T-cell (primary cell): ENCODE measurements at regions of chr20 and their contacts with region 1.

Region 1: DNA sequence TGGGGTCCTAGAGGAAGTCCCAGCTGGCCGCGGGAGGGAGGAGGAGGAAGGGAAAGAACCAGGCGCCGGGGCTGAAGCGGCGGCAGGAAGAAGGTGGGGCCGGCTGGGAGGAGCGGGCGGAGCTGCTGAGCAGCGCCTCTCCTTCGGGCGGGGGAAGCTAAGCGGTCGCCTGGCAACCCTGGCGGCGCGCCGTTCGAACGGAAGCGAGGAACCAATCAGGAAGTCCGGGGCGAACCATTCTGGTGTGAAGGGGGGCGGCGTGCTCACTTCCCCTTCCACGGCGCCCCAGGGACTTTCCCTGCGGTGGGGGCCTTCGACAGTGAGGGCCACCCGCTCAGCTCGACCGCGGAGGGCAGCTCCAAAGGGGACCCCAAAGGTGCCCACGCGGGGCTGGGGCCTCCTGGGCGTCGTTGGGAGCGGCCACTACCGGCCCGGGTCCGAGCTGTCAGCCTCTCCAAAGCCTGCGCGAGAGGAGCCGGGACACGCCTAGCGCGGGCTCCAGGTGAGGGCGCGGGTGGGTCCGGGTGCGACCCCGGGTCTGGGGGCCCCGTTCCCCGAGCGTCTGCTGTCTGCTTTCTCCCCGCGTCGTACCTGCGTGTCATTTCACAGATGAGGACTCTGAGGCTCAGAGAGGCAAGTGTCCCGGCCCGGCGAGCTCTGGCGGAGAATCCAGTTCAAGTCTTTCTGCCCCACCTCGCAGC is at the start of gene FAM110A:
- DNase-seq: peak; percentile 92 to 99 (median 95)
- ATAC-seq: peak; percentile 93 to 96 (median 94)
- H3K4me3 ChIP-seq: peak within 1 kb of the TSS; percentile 87 to 98
- H3K4me3 Mint-ChIP-seq: peak within 1 kb of the TSS; percentile 78 to 92 (median 86)
- H3K27ac ChIP-seq: peak within 1 kb of the TSS; percentile 85
- H3K27ac Mint-ChIP-seq: peak within 1 kb of the TSS; percentile 78 to 89
- H3K4me1 ChIP-seq: peaks cover 17 to 35% of the 10 kb centered on the region in 2 experiments
- H3K4me1 Mint-ChIP-seq: peaks cover 43 to 50% (median 45%) of the 10 kb centered on the region in 3 donors
- H3K27me3 ChIP-seq: no peaks in the 10 kb centered on the region
- H3K27me3 Mint-ChIP-seq: no peaks in the 10 kb centered on the region
- total RNA-seq, gene FAM110A: 12.7 to 27.9 (median 26.9) TPM

Region 2: DNA sequence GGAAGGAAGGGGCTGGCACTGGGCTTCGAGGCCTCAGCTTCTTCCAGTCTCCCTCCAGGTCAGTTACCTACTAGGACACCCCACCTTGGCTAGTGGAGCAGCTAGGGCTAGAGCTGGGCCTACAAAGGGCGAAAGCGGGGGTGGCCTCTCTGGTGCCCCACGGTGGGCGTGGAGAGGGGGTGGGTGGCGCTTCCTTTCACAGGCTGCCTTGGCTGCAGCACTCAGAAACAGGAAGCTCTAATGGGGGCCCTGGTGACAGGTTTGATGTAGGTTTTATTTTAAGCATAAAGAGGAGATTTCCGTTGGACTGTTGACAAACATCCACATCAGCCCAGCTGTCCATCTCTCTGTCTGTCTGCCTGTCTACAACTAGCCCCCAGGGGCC is 13.3 kb after region 1 on chr20:
- CTCF ChIA-PET with region 1: interaction called in 1 of 2 experiments, 11 read pairs
- POLR2A ChIA-PET with region 1: interaction called, 3 to 10 read pairs
- DNase-seq: peak in 34 of 35 experiments; percentile 21 to 71 (median 54)
- ATAC-seq: peak; percentile 58 to 65 (median 60)
- H3K4me3 ChIP-seq: peak overlapping the region; percentile 78 to 87
- H3K4me3 Mint-ChIP-seq: peak overlapping the region; percentile 88 to 90 (median 89)
- H3K27ac ChIP-seq: peak overlapping the region; percentile 65
- H3K27ac Mint-ChIP-seq: peak overlapping the region; percentile 99
- H3K4me1 ChIP-seq: peaks cover 18 to 73% of the 10 kb centered on the region in 2 experiments
- H3K4me1 Mint-ChIP-seq: peaks cover 59 to 71% (median 66%) of the 10 kb centered on the region in 3 donors
- H3K27me3 ChIP-seq: peaks cover 0 to 3% of the 10 kb centered on the region in 2 experiments
- H3K27me3 Mint-ChIP-seq: no peaks in the 10 kb centered on the region

Region 3: DNA sequence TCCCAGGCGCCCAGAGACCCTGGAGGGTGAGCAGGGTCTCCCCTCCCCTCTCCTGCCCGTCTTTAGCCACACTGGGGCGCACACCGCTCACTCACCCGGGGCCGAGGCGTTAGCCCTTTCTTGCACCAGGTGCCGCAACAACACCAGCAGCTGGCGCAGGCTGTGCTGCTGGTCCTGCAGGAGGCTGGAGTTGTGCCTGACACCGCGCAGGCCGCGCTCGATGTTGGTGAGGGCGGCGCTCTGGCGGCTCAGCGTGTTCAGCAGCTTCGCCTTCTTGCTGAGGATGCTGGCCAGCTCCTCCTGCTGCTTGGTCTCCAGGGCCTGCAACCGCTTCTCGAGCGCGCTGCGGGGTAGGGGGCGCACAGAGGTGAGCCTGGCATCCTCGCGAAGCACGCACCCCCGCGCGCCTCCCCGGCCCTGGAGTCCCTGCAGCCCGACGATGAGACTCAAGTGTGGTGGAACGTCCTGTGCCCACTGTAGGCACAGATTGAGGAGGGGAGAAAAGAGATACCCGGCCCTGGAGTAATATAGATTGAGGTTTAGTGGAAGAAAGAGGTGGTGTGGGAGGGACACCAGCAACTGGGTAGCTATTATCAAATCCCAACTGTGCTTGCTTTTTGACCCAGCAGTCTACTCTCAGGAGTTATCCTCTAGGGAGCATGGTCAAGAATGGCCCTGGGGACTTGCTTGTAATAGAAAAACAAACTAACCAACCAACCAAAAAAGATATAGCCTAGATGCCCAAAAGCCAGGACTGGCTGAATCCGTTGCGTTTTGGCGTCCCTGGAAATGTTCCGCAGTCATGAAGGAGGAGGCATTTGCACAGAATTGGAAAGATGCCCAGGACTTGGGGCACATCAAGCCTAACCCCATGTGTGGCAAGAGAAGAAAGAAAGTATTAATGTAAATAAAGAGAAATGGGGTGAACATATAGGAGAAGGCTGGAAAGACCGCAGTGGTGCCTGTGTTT is 51.7 kb after region 1 on chr20:
- CTCF ChIA-PET with region 1: no interaction called
- POLR2A ChIA-PET with region 1: no interaction called
- DNase-seq: peak in 3 of 35 experiments; percentile 3 to 12 (median 6)
- ATAC-seq: peak in 1 of 4 experiments; percentile 53
- H3K4me3 ChIP-seq: no peak overlapping the region
- H3K4me3 Mint-ChIP-seq: no peak overlapping the region
- H3K27ac ChIP-seq: no peak overlapping the region
- H3K27ac Mint-ChIP-seq: no peak overlapping the region
- H3K4me1 ChIP-seq: peaks cover 0 to 9% of the 10 kb centered on the region in 2 experiments
- H3K4me1 Mint-ChIP-seq: peaks cover 0 to 9% (median 5%) of the 10 kb centered on the region in 3 donors
- H3K27me3 ChIP-seq: peaks cover 0 to 26% of the 10 kb centered on the region in 2 experiments
- H3K27me3 Mint-ChIP-seq: peaks cover 10 to 16% of the 10 kb centered on the region in 2 donors